Left ventricle myocardium superior (tissue), 1 donor: ENCODE measurements at regions of chr1 and their contacts with region 1.

Region 1: DNA sequence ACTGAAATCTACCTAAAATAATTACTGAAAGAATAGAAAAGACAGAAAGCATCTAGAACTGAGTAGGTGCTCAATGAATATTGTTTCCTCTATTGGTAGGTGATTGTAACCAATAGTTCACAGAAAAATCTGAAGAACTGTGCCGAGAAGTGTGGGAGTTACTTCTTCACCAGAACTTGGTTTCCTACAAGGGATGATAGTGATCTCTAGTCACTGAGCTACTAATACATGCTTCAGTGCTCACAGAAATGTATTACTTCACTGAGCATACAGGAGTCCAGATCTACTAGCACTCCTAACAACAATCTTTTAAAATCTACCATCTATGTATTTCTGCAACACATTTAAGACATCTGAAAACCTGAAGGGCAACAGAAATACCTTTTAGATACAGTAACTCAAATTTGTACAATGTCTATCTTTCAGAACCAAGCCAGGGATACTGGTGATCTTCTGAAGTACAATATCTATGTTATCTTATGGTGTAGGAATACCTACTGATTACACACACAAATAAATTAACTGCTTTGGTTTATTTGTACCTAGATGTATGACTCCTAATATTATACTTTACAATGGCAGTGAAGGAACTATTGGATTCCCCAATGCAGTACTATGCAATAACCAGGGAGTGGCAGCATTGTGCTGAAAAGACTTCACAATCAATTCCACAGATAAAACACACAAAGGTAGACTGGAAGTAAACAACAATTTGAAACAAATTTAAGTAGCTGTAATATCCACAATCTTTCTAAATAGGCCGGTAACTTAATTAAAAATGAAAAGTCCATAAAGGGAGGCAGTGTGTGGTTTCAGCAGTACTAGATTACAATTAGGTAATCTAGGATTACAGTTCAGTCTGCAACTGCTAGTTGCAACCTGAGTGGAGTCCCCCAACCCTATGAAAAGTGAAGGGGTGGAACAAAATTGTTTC is 243.0 kb downstream of the SLC45A1 start:
- DNase-seq: no peak
- ATAC-seq: peak; percentile 67

Region 2: DNA sequence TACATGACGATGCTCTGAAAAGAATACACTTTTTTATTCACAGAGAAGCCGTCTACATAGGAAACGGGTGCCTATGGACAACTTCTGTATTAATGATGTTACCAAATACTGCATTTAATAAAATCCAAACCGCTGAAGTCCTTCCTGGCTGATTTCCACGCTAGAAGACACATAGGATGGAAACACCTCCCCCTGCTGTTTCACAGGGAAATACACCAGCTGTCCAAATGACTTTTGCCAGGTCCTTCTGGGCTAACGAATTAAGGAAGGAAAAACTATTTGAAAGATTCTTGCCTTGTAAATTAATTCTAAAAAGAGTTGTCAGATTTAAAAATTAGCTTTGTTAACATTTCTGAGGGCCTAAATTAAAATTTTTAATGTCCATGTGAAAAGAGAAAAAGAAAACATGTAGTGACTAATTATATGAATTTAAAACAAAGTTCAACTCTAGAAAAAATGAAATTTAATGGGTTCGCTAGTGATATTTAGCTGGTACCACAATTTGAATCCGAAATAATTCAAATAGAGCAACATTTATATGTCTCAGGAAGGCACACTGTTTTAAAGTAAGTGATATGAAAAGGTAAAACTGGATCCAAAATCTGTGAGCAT is 110.5 kb after region 1 on chr1:
- intact Hi-C with region 1: loop called (anchors 5 kb)
- DNase-seq: no peak
- ATAC-seq: peak; percentile 73

Region 3: GRCh38 chr1:8727809-8728213 is 166.9 kb after region 1 on chr1:
- intact Hi-C with region 1: loop called (anchors 5 kb)
- DNase-seq: peak; percentile 63
- ATAC-seq: peak; percentile 82

Region 4: DNA sequence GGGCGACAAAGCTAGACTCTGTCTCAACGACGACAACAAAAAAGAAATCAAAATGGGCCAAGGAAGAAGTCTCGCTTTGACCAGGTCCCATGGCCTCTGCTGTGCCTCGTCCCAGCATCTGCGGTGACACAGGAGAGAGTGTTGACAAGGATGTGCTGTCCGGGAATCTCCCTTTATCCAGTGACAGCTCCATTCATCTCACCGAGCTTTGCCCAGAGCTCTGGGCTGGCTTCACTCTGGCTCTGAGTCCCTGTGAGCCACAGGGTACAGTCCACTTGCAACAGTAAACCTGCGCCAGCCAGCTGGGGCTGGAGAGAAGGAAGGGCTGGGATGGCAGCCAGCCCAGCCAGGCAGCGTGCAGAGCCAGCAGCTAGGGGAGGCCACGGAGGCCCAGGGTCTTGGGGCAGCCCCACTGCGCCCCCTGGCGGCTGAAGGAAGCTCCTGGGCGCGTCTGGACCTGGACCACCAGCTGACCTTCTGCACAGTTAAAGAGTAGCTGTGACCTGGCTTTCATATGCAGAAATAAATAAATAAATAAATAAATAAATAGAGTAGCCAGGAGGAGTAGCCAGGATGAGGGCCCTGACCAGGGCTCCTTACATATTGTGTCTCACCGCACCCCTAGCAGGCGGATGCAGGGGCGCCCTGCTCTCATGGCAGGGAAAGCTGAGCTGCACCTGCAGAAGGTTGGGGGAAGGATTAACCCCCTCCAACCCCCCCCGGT is 287.9 kb after region 1 on chr1:
- intact Hi-C with region 1: loop called (anchors 10 kb)
- DNase-seq: peak; percentile 97
- ATAC-seq: peak; percentile 99